GM12878 (cell line): ENCODE measurements at regions of chr20 and their contacts with region 1.

Region 1: GRCh38 chr20:12554424-12554823 is 454.3 kb upstream of the SPTLC3 start:
- DNase-seq: no peak
- ATAC-seq: no peak
- H3K4me3 ChIP-seq: no peak overlapping the region
- H3K27ac ChIP-seq: no peak overlapping the region
- H3K4me1 ChIP-seq: no peaks in the 10 kb centered on the region
- H3K27me3 ChIP-seq: no peaks in the 10 kb centered on the region
- CTCF ChIP-seq: no peak
- EP300 ChIP-seq: no peak
- POLR2A ChIP-seq: no peak
- RAD21 ChIP-seq: no peak

Region 2: GRCh38 chr20:12223057-12223456 is 331.4 kb before region 1 on chr20:
- CTCF ChIA-PET with region 1: no interaction called
- POLR2A ChIA-PET with region 1: no interaction called
- RAD21 ChIA-PET with region 1: no interaction called
- SMC1A ChIA-PET with region 1: no interaction called
- in situ Hi-C with region 1: no loop called
- intact Hi-C with region 1: no loop called
- DNase-seq: no peak
- ATAC-seq: no peak
- H3K4me3 ChIP-seq: no peak overlapping the region
- H3K27ac ChIP-seq: no peak overlapping the region
- H3K4me1 ChIP-seq: no peaks in the 10 kb centered on the region
- H3K27me3 ChIP-seq: no peaks in the 10 kb centered on the region
- CTCF ChIP-seq: no peak
- EP300 ChIP-seq: no peak
- POLR2A ChIP-seq: no peak
- RAD21 ChIP-seq: no peak

Region 3: DNA sequence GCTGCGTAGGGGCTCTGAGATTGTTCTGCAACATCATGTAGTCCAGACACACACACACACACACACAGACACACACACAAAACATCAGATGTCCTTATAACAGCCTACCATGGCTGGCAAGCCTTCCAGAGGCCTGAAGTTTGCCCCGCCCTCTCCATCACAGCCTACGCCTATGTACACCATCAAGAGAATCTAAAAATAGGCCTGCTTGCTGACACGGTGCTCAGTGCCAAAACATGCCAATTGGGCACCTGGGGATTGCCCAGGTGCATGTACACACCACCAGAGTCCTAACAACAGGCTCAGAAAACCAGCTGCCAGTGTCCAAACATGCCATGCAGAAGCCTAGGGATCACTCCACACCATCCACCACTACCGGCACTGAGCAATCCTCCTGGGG is 62.7 kb after region 1 on chr20:
- CTCF ChIA-PET with region 1: no interaction called
- POLR2A ChIA-PET with region 1: no interaction called
- RAD21 ChIA-PET with region 1: no interaction called
- SMC1A ChIA-PET with region 1: no interaction called
- in situ Hi-C with region 1: no loop called
- intact Hi-C with region 1: loop called (anchors 10 kb)
- DNase-seq: no peak
- ATAC-seq: no peak
- H3K4me3 ChIP-seq: no peak overlapping the region
- H3K27ac ChIP-seq: no peak overlapping the region
- H3K4me1 ChIP-seq: no peaks in the 10 kb centered on the region
- H3K27me3 ChIP-seq: no peaks in the 10 kb centered on the region
- CTCF ChIP-seq: no peak
- EP300 ChIP-seq: no peak
- POLR2A ChIP-seq: no peak
- RAD21 ChIP-seq: no peak

Region 4: DNA sequence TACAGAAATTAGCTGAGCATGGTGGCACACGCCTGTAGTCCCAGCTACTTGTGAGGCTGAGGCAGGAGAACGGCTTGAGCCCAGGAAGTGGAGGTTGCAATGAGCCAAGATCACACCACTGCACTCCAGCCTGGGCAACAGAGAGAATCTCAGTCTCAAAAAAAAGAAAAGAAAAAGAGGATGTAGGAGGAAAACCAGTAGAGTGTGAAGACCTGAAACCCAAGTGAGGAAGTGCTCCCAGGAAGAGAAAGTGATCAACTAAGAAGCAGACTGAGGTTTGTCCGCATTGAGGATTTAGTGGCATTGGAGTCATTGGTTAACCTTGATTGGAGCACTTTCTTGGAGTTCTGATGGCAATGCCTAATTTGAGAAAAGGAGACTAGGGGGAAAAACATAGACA is 1104.9 kb after region 1 on chr20:
- CTCF ChIA-PET with region 1: no interaction called
- POLR2A ChIA-PET with region 1: no interaction called
- RAD21 ChIA-PET with region 1: no interaction called
- SMC1A ChIA-PET with region 1: no interaction called
- in situ Hi-C with region 1: no loop called
- intact Hi-C with region 1: no loop called
- DNase-seq: peak; percentile 70
- ATAC-seq: peak; percentile 98
- H3K4me3 ChIP-seq: no peak overlapping the region
- H3K27ac ChIP-seq: no peak overlapping the region
- H3K4me1 ChIP-seq: peaks cover 15% of the 10 kb centered on the region
- H3K27me3 ChIP-seq: no peaks in the 10 kb centered on the region
- CTCF ChIP-seq: no peak
- EP300 ChIP-seq: peak in 1 of 2 experiments; percentile 91; a peak in 2 of 4 replicates
- POLR2A ChIP-seq: no peak
- RAD21 ChIP-seq: no peak